ENCODE measurements at regions of chr10 and their contacts with region 1.

Region 1: DNA sequence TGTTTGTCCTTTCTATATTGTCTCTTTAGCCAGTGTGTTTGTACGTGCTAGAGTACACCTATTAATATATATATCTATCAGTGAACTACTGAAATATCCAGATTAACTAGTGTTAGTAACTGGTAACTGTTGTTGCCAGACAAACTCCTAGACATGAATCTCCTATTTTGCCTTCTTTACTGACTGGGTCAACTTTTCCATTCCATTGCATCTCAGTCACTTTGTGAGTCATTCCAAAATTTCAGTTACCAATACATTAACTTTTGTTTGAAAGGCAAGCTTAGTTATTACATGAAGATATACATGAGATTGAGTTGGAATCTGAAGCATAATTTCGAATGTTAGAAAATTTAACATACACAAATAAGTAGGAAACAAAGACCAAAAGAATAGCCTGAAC is 51.4 kb downstream of the BTAF1 start:
- DNase-seq: no peak
- H3K4me3 ChIP-seq: no peak overlapping the region
- H3K27ac ChIP-seq: no peak overlapping the region
- H3K4me1 ChIP-seq: no peaks in the 10 kb centered on the region
- H3K27me3 ChIP-seq: no peaks in the 10 kb centered on the region
- CTCF ChIP-seq: no peak

Region 2: DNA sequence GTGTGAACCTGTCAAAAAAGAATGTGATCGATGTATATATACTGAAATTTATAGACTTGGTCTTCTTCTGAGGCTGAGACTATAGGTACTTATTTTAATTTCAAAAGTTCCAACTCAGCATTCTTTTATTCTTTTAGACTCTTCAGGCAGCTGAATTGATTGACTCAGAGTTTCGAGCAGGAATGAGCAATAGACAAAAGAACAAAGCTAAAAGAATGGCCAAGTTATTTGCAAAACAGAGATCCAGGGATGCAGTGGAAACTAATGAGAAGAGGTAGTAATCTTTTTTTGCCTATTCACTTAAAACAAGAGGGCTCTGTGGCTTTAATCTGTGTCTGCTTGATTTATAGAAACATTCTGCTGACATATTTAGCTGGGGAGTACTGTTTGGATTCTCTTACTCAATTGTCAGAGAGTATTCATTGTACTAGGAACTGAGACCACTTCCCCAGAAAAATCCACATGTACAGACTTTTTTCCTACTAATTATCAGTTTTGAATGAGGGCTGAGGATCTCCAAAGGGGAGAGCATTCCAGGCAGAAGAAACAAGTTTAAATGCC is 21.3 kb before region 1 on chr10:
- CTCF ChIA-PET with region 1: no interaction called
- POLR2A ChIA-PET with region 1: no interaction called
- intact Hi-C with region 1: no loop called
- DNase-seq: no peak
- H3K4me3 ChIP-seq: no peak overlapping the region
- H3K27ac ChIP-seq: no peak overlapping the region
- H3K4me1 ChIP-seq: peaks cover 16% of the 10 kb centered on the region
- H3K27me3 ChIP-seq: no peaks in the 10 kb centered on the region
- CTCF ChIP-seq: no peak

Region 3: GRCh38 chr10:92024700-92025099 is 49.7 kb after region 1 on chr10:
- CTCF ChIA-PET with region 1: no interaction called
- POLR2A ChIA-PET with region 1: interaction called, 30 read pairs
- intact Hi-C with region 1: no loop called
- DNase-seq: no peak
- H3K4me3 ChIP-seq: no peak overlapping the region
- H3K27ac ChIP-seq: no peak overlapping the region
- H3K4me1 ChIP-seq: no peaks in the 10 kb centered on the region
- H3K27me3 ChIP-seq: no peaks in the 10 kb centered on the region
- CTCF ChIP-seq: no peak